Spleen (tissue), 13 donors: ENCODE measurements at regions of chr6 and their contacts with region 1.

Region 1: GRCh38 chr6:82270881-82271645 is 23.5 kb upstream of the IBTK start:
- DNase-seq: no peak
- H3K4me3 ChIP-seq: no peak overlapping the region
- H3K27ac ChIP-seq: no peak overlapping the region
- H3K4me1 ChIP-seq: peaks cover 0 to 4% (median 0%) of the 10 kb centered on the region in 6 donors
- H3K27me3 ChIP-seq: no peaks in the 10 kb centered on the region
- CTCF ChIP-seq: peak in 8 of 11 experiments; percentile 22 to 63 (median 53)
- POLR2A ChIP-seq: no peak

Region 2: GRCh38 chr6:82348130-82348529 is 77.1 kb after region 1 on chr6:
- intact Hi-C with region 1: no loop called
- DNase-seq: no peak
- H3K4me3 ChIP-seq: no peak overlapping the region
- H3K27ac ChIP-seq: no peak overlapping the region
- H3K4me1 ChIP-seq: no peaks in the 10 kb centered on the region
- H3K27me3 ChIP-seq: peaks cover 0 to 9% (median 0%) of the 10 kb centered on the region in 7 donors
- CTCF ChIP-seq: no peak
- POLR2A ChIP-seq: no peak

Region 3: GRCh38 chr6:82589509-82590206 is 318.6 kb after region 1 on chr6:
- intact Hi-C with region 1: loop called (anchors 10 kb)
- DNase-seq: no peak
- H3K4me3 ChIP-seq: no peak overlapping the region
- H3K27ac ChIP-seq: no peak overlapping the region
- H3K4me1 ChIP-seq: no peaks in the 10 kb centered on the region
- H3K27me3 ChIP-seq: no peaks in the 10 kb centered on the region
- CTCF ChIP-seq: no peak
- POLR2A ChIP-seq: no peak

Region 4: GRCh38 chr6:83057705-83058321 is 786.8 kb after region 1 on chr6:
- intact Hi-C with region 1: loop called (anchors 5 kb)
- DNase-seq: no peak
- H3K4me3 ChIP-seq: no peak overlapping the region
- H3K27ac ChIP-seq: no peak overlapping the region
- H3K4me1 ChIP-seq: peaks cover 0 to 9% (median 2%) of the 10 kb centered on the region in 6 donors
- H3K27me3 ChIP-seq: no peaks in the 10 kb centered on the region
- CTCF ChIP-seq: peak in 8 of 11 experiments; percentile 22 to 56 (median 45)
- POLR2A ChIP-seq: no peak